ENCODE measurements at regions of chr12 and their contacts with region 1.

Region 1: DNA sequence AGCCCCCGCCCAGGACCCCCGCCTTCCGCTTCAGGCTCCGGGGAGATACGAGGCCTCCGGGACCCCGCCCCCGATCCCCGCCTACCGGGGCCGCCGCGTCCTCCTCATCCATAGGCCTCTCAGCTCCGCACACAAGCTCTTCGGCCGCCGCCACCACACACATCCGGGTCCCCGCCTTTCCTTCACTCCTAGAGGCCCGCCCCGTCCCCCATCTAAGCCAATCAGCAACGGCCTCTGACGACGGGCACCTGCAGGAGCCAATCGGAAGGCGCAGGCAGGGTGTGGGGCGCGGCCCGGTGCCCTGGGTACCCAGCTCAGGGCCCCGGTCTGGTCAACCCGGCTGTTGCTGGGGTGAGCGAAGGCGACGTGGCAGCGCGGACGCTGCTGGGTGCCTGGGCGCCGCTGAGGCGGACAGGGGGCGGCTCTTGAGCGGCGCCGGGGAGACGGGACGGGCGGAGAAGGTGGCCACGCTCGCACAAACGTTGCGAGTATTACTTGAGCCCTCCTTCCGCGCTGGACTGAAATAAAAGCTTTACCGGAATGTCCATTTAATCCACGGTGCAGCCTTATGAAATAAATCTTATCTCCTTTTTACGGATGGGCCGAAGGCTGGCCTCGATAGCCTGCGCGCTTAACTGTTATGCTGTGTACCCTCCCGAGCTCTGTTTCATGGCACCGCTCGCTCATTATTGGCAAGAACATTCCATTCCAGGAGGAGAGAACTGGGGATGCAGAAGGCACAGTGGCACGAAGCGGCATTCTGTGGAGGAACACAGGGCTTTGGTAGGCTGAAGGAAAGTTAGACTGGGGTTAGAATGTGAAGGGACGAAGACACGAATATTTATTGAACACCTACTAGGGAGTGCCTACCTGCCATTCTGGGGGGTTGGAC is at the start of gene SPRYD3:
- DNase-seq: peak; percentile 99
- H3K4me3 ChIP-seq: peak within 1 kb of the TSS; percentile 54 to 77 (median 66)
- H3K27ac ChIP-seq: peak within 1 kb of the TSS; percentile 93 to 97 (median 95)
- H3K4me1 ChIP-seq: peaks cover 0 to 34% (median 30%) of the 10 kb centered on the region in 4 donors
- H3K27me3 ChIP-seq: no peaks in the 10 kb centered on the region
- CTCF ChIP-seq: no peak
- EP300 ChIP-seq: no peak
- POLR2A ChIP-seq: peak; percentile 81 to 90
- total RNA-seq, gene SPRYD3: 31.9 to 41.4 (median 35.7) TPM

Region 2: GRCh38 chr12:53047221-53048042 is 32.0 kb before region 1 on chr12:
- intact Hi-C with region 1: loop called (anchors 2 kb)
- DNase-seq: peak; percentile 94
- H3K4me3 ChIP-seq: peak overlapping the region; percentile 48 to 75 (median 68)
- H3K27ac ChIP-seq: peak overlapping the region; percentile 98 to 100 (median 98)
- H3K4me1 ChIP-seq: peaks cover 0 to 86% (median 75%) of the 10 kb centered on the region in 4 donors
- H3K27me3 ChIP-seq: no peaks in the 10 kb centered on the region
- CTCF ChIP-seq: no peak
- EP300 ChIP-seq: no peak
- POLR2A ChIP-seq: peak in 1 of 2 donors; percentile 44

Region 3: GRCh38 chr12:53098982-53099651 is 19.6 kb after region 1 on chr12:
- intact Hi-C with region 1: loop called (anchors 2 kb)
- DNase-seq: peak; percentile 97
- H3K4me3 ChIP-seq: peak overlapping the region; percentile 38 to 69 (median 58)
- H3K27ac ChIP-seq: peak overlapping the region; percentile 77 to 93 (median 84)
- H3K4me1 ChIP-seq: peaks cover 0 to 33% (median 29%) of the 10 kb centered on the region in 4 donors
- H3K27me3 ChIP-seq: no peaks in the 10 kb centered on the region
- CTCF ChIP-seq: peak; percentile 93 to 98 (median 96)
- EP300 ChIP-seq: no peak
- POLR2A ChIP-seq: peak in 1 of 2 donors; percentile 18